Right cardiac atrium (tissue), 5 donors: ENCODE measurements at regions of chr15 and their contacts with region 1.

Region 1: GRCh38 chr15:64515196-64515595 is 54.8 kb downstream of the ZNF609 start:
- DNase-seq: no peak
- ATAC-seq: peak in 1 of 2 donors; percentile 36
- H3K4me3 ChIP-seq: no peak overlapping the region
- H3K27ac ChIP-seq: no peak overlapping the region
- H3K4me1 ChIP-seq: peaks cover 5% of the 10 kb centered on the region
- H3K27me3 ChIP-seq: no peaks in the 10 kb centered on the region

Region 2: GRCh38 chr15:64180235-64180837 is 334.9 kb before region 1 on chr15:
- intact Hi-C with region 1: loop called in 1 of 4 experiments (anchors 10 kb)
- DNase-seq: no peak
- ATAC-seq: no peak
- H3K4me3 ChIP-seq: no peak overlapping the region
- H3K27ac ChIP-seq: no peak overlapping the region
- H3K4me1 ChIP-seq: no peaks in the 10 kb centered on the region
- H3K27me3 ChIP-seq: no peaks in the 10 kb centered on the region